ENCODE measurements at regions of chr4 and their contacts with region 1.

Region 1: DNA sequence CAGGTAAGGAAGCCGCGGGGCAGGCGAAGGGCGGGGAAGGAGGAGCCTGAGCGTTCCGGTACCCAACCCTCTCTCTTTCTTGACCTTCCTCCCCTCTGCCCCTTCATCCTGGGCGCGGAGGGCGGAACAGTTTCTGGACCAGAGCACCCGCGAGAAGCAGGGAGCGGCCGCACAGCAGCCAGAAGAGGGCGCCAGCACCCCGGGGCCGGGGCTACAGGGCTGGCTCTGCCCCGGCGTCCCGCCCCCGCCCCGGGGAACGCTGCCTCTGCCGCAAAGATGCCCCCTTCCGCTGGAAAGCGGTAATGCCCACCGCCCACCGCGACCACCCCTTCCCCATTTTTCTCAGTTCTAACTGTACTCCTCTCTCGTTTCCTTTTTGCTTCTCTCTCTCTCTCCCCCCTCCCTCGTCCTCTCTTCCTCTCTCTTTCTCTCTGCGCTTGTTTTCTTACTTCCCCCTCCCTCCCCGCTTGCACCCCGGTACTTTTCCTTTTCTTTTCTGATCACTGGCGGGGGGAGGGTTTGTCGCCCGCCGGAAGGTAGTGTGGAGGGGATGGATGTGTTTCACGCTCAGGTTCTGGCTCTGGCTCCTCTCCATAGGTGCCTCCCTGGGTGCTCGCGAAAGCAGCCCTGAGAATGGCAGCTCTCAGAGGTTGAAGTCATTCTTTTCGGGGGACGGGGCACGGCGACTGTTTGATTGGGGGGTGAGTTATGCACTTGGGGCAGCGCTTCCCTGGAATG is 13.1 kb upstream of the PRDM8 start:
- DNase-seq: peak; percentile 98
- H3K4me3 Mint-ChIP-seq: peak overlapping the region; percentile 96
- H3K27ac Mint-ChIP-seq: peak overlapping the region; percentile 95
- H3K4me1 Mint-ChIP-seq: peaks cover 48% of the 10 kb centered on the region
- H3K27me3 Mint-ChIP-seq: peaks cover 24% of the 10 kb centered on the region

Region 2: DNA sequence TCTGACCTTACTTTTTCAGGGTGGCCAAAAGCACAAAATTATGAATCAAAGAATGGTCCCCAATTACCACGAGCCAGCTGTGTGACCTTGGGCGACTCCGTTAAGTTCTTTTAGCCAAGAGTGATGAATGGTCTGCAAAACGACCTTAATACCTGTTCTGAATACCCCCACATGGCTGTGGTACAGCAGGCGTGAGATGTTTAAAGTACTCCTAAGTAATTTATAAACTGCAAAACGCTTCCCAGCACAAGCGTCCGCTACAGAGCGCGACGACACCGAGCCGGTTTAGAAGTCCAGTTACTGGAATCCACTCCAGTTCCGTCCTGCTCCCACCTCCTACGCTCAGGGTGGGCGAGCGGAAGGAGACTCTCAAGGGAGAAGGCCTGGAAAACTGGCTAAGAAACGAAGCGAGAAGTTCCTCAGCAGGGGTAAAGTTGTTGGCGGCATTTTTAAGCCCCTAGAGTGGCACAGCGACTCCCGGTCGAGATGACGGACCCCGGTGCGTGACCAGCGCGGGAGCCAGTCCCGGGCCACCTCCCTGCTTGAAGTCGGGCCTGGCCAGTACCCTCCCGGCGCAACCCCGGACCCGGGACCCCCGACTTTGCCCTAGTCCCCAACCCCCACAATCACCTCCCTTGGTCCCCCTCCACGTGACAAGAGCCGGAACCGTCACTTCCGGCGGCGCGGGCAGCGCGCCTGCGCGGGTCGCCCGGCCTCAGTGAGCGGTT is 1408.8 kb before region 1 on chr4:
- intact Hi-C with region 1: loop called (anchors 10 kb)
- DNase-seq: peak; percentile 97
- H3K4me3 Mint-ChIP-seq: peak overlapping the region; percentile 93
- H3K27ac Mint-ChIP-seq: peak overlapping the region; percentile 98
- H3K4me1 Mint-ChIP-seq: peaks cover 34% of the 10 kb centered on the region
- H3K27me3 Mint-ChIP-seq: no peaks in the 10 kb centered on the region

Region 3: GRCh38 chr4:79917246-79917645 is 267.0 kb before region 1 on chr4:
- intact Hi-C with region 1: loop called (anchors 1 kb)
- DNase-seq: peak; percentile 83
- H3K4me3 Mint-ChIP-seq: no peak overlapping the region
- H3K27ac Mint-ChIP-seq: no peak overlapping the region
- H3K4me1 Mint-ChIP-seq: peaks cover 12% of the 10 kb centered on the region
- H3K27me3 Mint-ChIP-seq: no peaks in the 10 kb centered on the region

Region 4: GRCh38 chr4:80072744-80073472 is 111.3 kb before region 1 on chr4 and contains the start of gene ANTXR2:
- intact Hi-C with region 1: loop called (anchors 1 kb)
- DNase-seq: peak; percentile 93
- H3K4me3 Mint-ChIP-seq: peak within 1 kb of the TSS; percentile 97
- H3K27ac Mint-ChIP-seq: peak within 1 kb of the TSS; percentile 95
- H3K4me1 Mint-ChIP-seq: peaks cover 68% of the 10 kb centered on the region
- H3K27me3 Mint-ChIP-seq: peaks cover 2% of the 10 kb centered on the region
- total RNA-seq, gene ANTXR2: 8.2 and 10.6 TPM in 2 replicates

Region 5: GRCh38 chr4:80153874-80154544 is 30.2 kb before region 1 on chr4:
- intact Hi-C with region 1: loop called (anchors 1 kb)
- DNase-seq: no peak
- H3K4me3 Mint-ChIP-seq: peak overlapping the region; percentile 43
- H3K27ac Mint-ChIP-seq: peak overlapping the region; percentile 88
- H3K4me1 Mint-ChIP-seq: peaks cover 18% of the 10 kb centered on the region
- H3K27me3 Mint-ChIP-seq: peaks cover 7% of the 10 kb centered on the region

Measured in activated CD4-positive, alpha-beta T cell treated with anti-CD3 and anti-CD28 coated beads, Interleukin-2, amount 10 ng/mL, durations not matched to agents 24 days and 14 days (primary cell).